PC-3 (cell line): ENCODE measurements at regions of chr21 and their contacts with region 1.

Region 1: GRCh38 chr21:31098576-31099005 is 60.3 kb upstream of the KRTAP19-8 start:
- DNase-seq: peak; percentile 83
- ATAC-seq: peak; percentile 91
- H3K4me3 ChIP-seq: no peak overlapping the region
- H3K27ac ChIP-seq: no peak overlapping the region
- H3K4me1 ChIP-seq: no peaks in the 10 kb centered on the region
- H3K27me3 ChIP-seq: no peaks in the 10 kb centered on the region; the same call in 1 of the 2 replicates
- CTCF ChIP-seq: peak; percentile 95

Region 2: DNA sequence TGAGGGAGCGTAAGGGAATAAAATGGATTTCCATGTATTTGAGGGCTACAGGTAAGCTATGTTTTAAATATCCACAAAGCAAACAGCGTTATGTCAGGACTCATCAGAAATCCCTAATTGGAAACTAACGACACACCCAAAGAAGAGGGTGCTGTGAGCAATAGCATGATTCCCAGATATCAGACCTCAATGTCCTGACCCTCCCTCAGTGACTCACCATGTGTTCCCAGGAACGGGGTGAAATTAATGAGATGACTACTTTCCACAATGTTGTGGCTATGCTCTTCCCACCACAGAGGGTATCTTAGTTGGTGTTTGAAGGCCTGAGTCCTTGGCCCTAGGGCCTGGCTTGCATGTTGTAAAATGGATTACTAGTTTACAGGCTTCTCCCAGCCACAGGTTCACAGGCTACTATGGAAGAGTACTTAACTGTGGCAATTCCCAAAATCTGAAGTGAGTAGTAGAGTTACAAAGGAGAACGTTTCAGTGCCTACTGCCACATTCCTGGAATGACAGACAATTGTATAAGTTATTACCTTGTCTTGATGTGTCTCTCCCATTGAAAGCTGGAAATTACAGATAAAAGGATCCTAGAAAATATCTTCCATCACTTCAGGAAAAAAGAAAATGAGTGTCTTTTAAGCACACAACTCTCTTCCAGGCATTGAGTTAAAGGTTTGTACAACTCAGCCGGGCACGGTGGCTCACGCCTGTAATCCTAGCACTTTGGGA is 215.6 kb before region 1 on chr21:
- CTCF ChIA-PET with region 1: no interaction called
- POLR2A ChIA-PET with region 1: no interaction called
- intact Hi-C with region 1: no loop called
- DNase-seq: peak; percentile 43
- ATAC-seq: no peak
- H3K4me3 ChIP-seq: no peak overlapping the region
- H3K27ac ChIP-seq: no peak overlapping the region
- H3K4me1 ChIP-seq: no peaks in the 10 kb centered on the region
- H3K27me3 ChIP-seq: peaks cover 56% of the 10 kb centered on the region
- CTCF ChIP-seq: no peak

Region 3: DNA sequence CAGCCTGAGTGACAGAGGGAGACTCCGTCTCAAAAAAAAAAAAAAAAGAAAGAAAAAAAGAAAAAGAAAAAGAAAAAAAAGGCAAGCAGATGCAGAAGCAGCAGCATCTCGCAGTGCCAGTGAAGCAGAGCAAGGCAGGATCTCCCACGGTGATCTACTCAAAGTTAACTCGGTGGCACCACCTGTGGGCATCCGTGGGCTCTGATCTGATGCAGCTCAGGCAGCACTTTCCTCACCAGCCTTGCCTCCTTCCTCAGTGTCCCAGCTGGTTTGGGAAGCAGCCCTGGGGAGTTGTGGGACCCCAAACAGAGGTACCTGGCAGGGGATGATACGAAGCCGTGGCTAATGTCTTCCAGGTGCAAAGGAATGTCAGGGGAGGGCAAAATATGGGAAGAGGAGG is 44.0 kb after region 1 on chr21:
- CTCF ChIA-PET with region 1: no interaction called
- POLR2A ChIA-PET with region 1: no interaction called
- intact Hi-C with region 1: loop called (anchors 1 kb)
- DNase-seq: peak; percentile 47
- ATAC-seq: peak; percentile 83
- H3K4me3 ChIP-seq: no peak overlapping the region
- H3K27ac ChIP-seq: no peak overlapping the region
- H3K4me1 ChIP-seq: no peaks in the 10 kb centered on the region
- H3K27me3 ChIP-seq: no peaks in the 10 kb centered on the region
- CTCF ChIP-seq: peak; percentile 50

Region 4: GRCh38 chr21:31180256-31181081 is 81.9 kb after region 1 on chr21:
- CTCF ChIA-PET with region 1: interaction called, 3 read pairs
- POLR2A ChIA-PET with region 1: no interaction called
- intact Hi-C with region 1: loop called (anchors 1 kb)
- DNase-seq: peak; percentile 71
- ATAC-seq: peak; percentile 77
- H3K4me3 ChIP-seq: no peak overlapping the region
- H3K27ac ChIP-seq: no peak overlapping the region
- H3K4me1 ChIP-seq: no peaks in the 10 kb centered on the region
- H3K27me3 ChIP-seq: no peaks in the 10 kb centered on the region
- CTCF ChIP-seq: peak; percentile 81

Region 5: GRCh38 chr21:31604591-31605190 is 506.1 kb after region 1 on chr21:
- CTCF ChIA-PET with region 1: no interaction called
- POLR2A ChIA-PET with region 1: no interaction called
- intact Hi-C with region 1: loop called (anchors 1 kb)
- DNase-seq: peak; percentile 87
- ATAC-seq: peak; percentile 91
- H3K4me3 ChIP-seq: no peak overlapping the region
- H3K27ac ChIP-seq: no peak overlapping the region
- H3K4me1 ChIP-seq: peaks cover 11% of the 10 kb centered on the region
- H3K27me3 ChIP-seq: no peaks in the 10 kb centered on the region
- CTCF ChIP-seq: peak; percentile 94